CD8-positive, alpha-beta T cell (primary cell): ENCODE measurements at regions of chrX and their contacts with region 1.

Region 1: GRCh38 chrX:1453951-1454785 is 1.5 kb upstream of the ASMTL start:
- DNase-seq: peak; percentile 87 to 97 (median 92)
- ATAC-seq: peak; percentile 33
- H3K4me3 ChIP-seq: peak overlapping the region; percentile 33 to 40
- H3K4me3 Mint-ChIP-seq: peak overlapping the region; percentile 74
- H3K27ac ChIP-seq: peak overlapping the region; percentile 41 to 96
- H3K27ac Mint-ChIP-seq: peak overlapping the region; percentile 82
- H3K4me1 ChIP-seq: peaks cover 41% of the 10 kb centered on the region
- H3K4me1 Mint-ChIP-seq: peaks cover 22% of the 10 kb centered on the region
- H3K27me3 ChIP-seq: no peaks in the 10 kb centered on the region
- H3K27me3 Mint-ChIP-seq: no peaks in the 10 kb centered on the region
- CTCF ChIP-seq: peak; percentile 98

Region 2: GRCh38 chrX:1391707-1392375 is 62.3 kb before region 1 on chrX and contains the start of gene SLC25A6:
- CTCF ChIA-PET with region 1: no interaction called
- POLR2A ChIA-PET with region 1: no interaction called
- intact Hi-C with region 1: loop called (anchors 1 kb)
- DNase-seq: peak; percentile 99 to 100 (median 99)
- ATAC-seq: peak; percentile 95
- H3K4me3 ChIP-seq: peak within 1 kb of the TSS; percentile 99
- H3K4me3 Mint-ChIP-seq: peak within 1 kb of the TSS; percentile 90
- H3K27ac ChIP-seq: peak within 1 kb of the TSS; percentile 96 to 98
- H3K27ac Mint-ChIP-seq: peak within 1 kb of the TSS; percentile 92
- H3K4me1 ChIP-seq: peaks cover 44% of the 10 kb centered on the region
- H3K4me1 Mint-ChIP-seq: peaks cover 47% of the 10 kb centered on the region
- H3K27me3 ChIP-seq: no peaks in the 10 kb centered on the region
- H3K27me3 Mint-ChIP-seq: no peaks in the 10 kb centered on the region
- CTCF ChIP-seq: no peak
- total RNA-seq, gene SLC25A6: 382 to 404 TPM

Region 3: DNA sequence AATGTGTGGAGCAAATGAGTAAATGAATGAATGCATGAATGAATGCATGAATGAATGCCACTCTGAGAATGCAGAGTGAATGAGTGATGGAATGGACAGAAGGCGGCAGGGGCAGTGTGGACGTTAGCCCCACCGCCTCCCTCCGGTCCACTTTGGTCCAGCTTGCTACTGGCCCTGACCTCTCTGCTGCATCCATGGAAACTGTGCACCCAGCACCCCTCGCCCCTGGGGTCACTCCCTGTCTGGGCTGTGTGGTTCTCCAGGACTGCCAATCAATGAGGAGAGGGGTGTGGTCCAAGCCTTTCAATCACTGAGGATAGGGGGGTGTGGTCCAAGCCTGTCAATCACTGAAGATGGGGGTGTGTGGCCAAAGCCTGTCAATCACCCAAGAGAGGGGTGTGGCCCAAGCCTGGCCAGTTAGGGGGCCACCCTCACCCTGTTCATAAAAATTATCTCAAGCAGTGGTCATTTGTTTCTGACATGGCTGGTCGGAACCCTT is 37.7 kb after region 1 on chrX:
- CTCF ChIA-PET with region 1: no interaction called
- POLR2A ChIA-PET with region 1: no interaction called
- intact Hi-C with region 1: loop called in 1 of 2 experiments (anchors 1 kb)
- DNase-seq: peak in 5 of 9 experiments; percentile 41 to 78 (median 68)
- ATAC-seq: peak; percentile 64
- H3K4me3 ChIP-seq: no peak overlapping the region
- H3K4me3 Mint-ChIP-seq: no peak overlapping the region
- H3K27ac ChIP-seq: peak overlapping the region in 1 of 2 experiments; percentile 8
- H3K27ac Mint-ChIP-seq: peak overlapping the region; percentile 80
- H3K4me1 ChIP-seq: peaks cover 11% of the 10 kb centered on the region
- H3K4me1 Mint-ChIP-seq: peaks cover 23% of the 10 kb centered on the region
- H3K27me3 ChIP-seq: no peaks in the 10 kb centered on the region
- H3K27me3 Mint-ChIP-seq: no peaks in the 10 kb centered on the region
- CTCF ChIP-seq: no peak

Region 4: GRCh38 chrX:1591102-1591900 is 137.1 kb after region 1 on chrX and contains the start of gene AKAP17A:
- CTCF ChIA-PET with region 1: no interaction called
- POLR2A ChIA-PET with region 1: no interaction called
- intact Hi-C with region 1: loop called (anchors 1 kb)
- DNase-seq: peak; percentile 95 to 100 (median 98)
- ATAC-seq: peak; percentile 88
- H3K4me3 ChIP-seq: peak within 1 kb of the TSS; percentile 82 to 85
- H3K4me3 Mint-ChIP-seq: peak within 1 kb of the TSS; percentile 90
- H3K27ac ChIP-seq: peak within 1 kb of the TSS; percentile 71 to 79
- H3K27ac Mint-ChIP-seq: peak within 1 kb of the TSS; percentile 91
- H3K4me1 ChIP-seq: peaks cover 35% of the 10 kb centered on the region
- H3K4me1 Mint-ChIP-seq: peaks cover 39% of the 10 kb centered on the region
- H3K27me3 ChIP-seq: no peaks in the 10 kb centered on the region
- H3K27me3 Mint-ChIP-seq: no peaks in the 10 kb centered on the region
- CTCF ChIP-seq: no peak
- total RNA-seq, gene AKAP17A: 193 to 209 TPM

Region 5: GRCh38 chrX:2589186-2590030 is 1135.2 kb after region 1 on chrX:
- CTCF ChIA-PET with region 1: no interaction called
- POLR2A ChIA-PET with region 1: no interaction called
- intact Hi-C with region 1: loop called (anchors 5 kb)
- DNase-seq: no peak
- ATAC-seq: no peak
- H3K4me3 ChIP-seq: no peak overlapping the region
- H3K4me3 Mint-ChIP-seq: no peak overlapping the region
- H3K27ac ChIP-seq: no peak overlapping the region
- H3K27ac Mint-ChIP-seq: no peak overlapping the region
- H3K4me1 ChIP-seq: no peaks in the 10 kb centered on the region
- H3K4me1 Mint-ChIP-seq: peaks cover 11% of the 10 kb centered on the region
- H3K27me3 ChIP-seq: no peaks in the 10 kb centered on the region
- H3K27me3 Mint-ChIP-seq: peaks cover 4% of the 10 kb centered on the region
- CTCF ChIP-seq: no peak

Region 6: DNA sequence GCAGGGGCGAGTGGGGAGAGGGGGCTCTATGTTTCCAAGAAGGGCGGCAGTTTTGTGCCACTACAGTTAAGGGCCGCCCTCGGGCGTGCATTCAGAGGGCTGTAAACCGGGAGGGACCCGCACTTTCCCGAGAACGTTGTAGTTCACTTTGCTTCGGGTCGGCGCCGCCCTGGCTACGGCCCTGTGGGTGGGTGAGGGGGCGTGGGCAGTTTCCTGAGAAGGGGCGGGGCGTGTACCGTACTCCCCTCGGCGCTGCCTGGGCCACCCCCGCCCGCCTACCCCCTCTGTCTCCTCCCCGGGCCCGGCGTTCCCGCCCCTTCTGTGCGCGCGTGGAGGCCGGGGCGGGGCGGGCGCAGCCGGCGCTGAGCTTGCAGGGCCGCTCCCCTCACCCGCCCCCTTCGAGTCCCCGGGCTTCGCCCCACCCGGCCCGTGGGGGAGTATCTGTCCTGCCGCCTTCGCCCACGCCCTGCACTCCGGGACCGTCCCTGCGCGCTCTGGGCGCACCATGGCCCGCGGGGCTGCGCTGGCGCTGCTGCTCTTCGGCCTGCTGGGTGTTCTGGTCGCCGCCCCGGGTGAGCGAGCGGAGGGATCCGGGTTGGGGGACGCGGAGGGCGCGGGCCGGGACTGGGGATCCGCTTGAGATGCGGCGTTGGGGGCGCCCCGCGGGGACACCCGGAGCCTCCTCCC is 1236.8 kb after region 1 on chrX and contains the start of gene CD99:
- CTCF ChIA-PET with region 1: no interaction called
- POLR2A ChIA-PET with region 1: no interaction called
- intact Hi-C with region 1: loop called (anchors 1 to 2 kb)
- DNase-seq: peak; percentile 83 to 96 (median 89)
- ATAC-seq: peak; percentile 93
- H3K4me3 ChIP-seq: peak within 1 kb of the TSS; percentile 80 to 91
- H3K4me3 Mint-ChIP-seq: peak within 1 kb of the TSS; percentile 94
- H3K27ac ChIP-seq: peak within 1 kb of the TSS; percentile 70 to 71
- H3K27ac Mint-ChIP-seq: peak within 1 kb of the TSS; percentile 94
- H3K4me1 ChIP-seq: peaks cover 44% of the 10 kb centered on the region
- H3K4me1 Mint-ChIP-seq: peaks cover 37% of the 10 kb centered on the region
- H3K27me3 ChIP-seq: no peaks in the 10 kb centered on the region
- H3K27me3 Mint-ChIP-seq: no peaks in the 10 kb centered on the region
- CTCF ChIP-seq: no peak
- total RNA-seq, gene CD99: 114 to 120 TPM